B cell (primary cell): ENCODE measurements at regions of chr22 and their contacts with region 1.

Region 1: DNA sequence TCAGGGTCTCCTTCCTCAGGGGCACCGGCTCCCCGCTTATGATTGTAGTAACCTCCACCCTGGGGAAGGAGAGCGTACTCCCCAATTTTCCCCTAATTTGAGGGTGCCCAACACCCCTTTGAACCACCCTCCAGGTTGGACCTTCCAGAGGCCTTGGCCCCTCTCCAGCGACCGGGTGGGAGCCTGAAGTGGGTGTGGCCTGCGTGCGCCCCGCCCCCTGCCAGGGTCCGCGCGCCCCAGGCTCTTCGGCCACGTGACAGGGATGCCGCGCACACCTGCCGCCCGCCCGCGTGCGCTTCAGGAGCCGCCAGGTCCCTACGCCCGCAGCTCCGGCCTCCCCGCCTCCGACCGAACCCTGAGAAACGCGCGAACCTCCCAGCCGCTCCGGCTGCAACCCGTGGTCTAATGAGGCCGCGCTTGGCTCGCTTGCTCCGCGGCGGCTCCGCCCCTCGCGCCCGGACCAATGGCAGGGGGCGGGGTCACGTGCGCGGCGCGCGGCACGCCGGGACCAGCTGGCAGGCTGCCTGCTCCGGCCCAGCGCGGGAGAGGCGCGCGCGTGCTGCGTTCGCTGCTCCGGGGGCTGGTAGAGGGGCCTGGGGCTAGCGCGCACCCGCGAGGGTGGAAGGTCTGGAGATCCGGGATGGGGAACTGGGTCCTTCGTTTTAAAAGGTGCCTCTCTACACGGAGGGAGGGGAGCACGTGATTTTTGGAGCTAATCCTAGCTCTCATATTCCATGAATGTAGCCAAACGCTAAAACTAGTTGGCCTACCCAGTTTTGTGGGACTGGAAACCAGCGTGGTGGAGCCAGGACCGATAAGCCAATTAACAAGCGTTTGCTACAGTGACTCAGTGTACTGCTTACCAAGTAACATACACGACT is at the start of gene FOXRED2:
- DNase-seq: peak; percentile 92
- ATAC-seq: peak; percentile 98
- H3K4me3 ChIP-seq: peak within 1 kb of the TSS; percentile 26 to 80 (median 59)
- H3K4me3 Mint-ChIP-seq: peak within 1 kb of the TSS; percentile 77
- H3K27ac ChIP-seq: peak within 1 kb of the TSS; percentile 43 to 68
- H3K27ac Mint-ChIP-seq: peak within 1 kb of the TSS; percentile 56
- H3K4me1 ChIP-seq: peaks cover 10 to 13% of the 10 kb centered on the region in 2 donors
- H3K4me1 Mint-ChIP-seq: peaks cover 11% of the 10 kb centered on the region
- H3K27me3 ChIP-seq: no peaks in the 10 kb centered on the region
- H3K27me3 Mint-ChIP-seq: no peaks in the 10 kb centered on the region
- CTCF ChIP-seq: no peak
- total RNA-seq, gene FOXRED2: 7.1 and 7.4 TPM in 2 replicates

Region 2: DNA sequence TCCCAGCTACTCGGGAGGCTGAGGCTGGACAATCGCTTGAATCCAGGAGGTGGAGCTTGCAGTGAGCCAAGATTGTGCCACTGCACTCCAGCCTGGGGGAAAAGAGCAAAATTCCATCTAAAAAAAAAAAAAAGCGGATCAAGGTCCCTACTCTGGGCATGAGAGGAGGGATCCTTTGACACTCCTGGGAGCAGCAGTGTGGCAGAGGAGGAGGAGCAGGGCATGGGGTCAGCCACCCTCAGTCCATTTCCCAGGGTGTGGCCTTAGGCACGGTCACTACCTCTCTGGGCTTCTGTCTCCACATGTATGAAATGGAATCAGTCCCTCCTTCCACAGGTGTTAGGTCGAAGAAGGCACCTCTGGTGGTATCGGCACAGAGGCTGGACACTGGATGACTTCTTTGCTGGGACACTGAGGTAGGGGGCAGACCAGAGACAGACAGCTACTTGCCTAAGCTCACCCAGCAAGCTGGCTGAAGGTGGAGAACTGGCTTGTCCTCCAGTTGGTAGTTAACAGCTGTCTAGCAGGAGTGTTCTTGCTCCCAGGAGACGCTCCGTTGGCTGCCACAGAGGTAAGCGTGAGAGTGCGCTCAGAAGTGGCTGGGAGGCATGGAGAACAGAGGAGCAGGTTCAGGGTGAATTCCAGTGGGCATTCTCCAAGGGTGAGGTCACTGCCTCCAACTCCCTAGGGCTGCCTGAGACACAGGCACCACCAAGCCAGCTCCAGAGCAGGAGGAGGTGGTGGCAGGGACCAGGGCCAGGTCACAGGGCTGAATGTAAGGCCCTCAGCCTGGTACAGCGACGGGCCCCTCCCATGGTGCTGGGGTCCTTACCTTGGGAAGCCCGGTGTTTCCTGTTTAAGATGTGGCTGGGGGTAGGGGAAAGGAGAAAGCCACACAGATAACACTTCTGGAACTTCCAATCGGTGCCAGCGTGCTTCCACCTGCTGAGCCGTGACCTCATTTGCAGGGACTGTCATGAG is 44.9 kb before region 1 on chr22:
- CTCF ChIA-PET with region 1: no interaction called
- POLR2A ChIA-PET with region 1: no interaction called
- intact Hi-C with region 1: no loop called
- DNase-seq: no peak
- ATAC-seq: no peak
- H3K4me3 ChIP-seq: no peak overlapping the region
- H3K4me3 Mint-ChIP-seq: no peak overlapping the region
- H3K27ac ChIP-seq: no peak overlapping the region
- H3K27ac Mint-ChIP-seq: no peak overlapping the region
- H3K4me1 ChIP-seq: peaks cover 3 to 7% of the 10 kb centered on the region in 2 donors
- H3K4me1 Mint-ChIP-seq: peaks cover 5% of the 10 kb centered on the region
- H3K27me3 ChIP-seq: no peaks in the 10 kb centered on the region
- H3K27me3 Mint-ChIP-seq: no peaks in the 10 kb centered on the region
- CTCF ChIP-seq: no peak

Region 3: GRCh38 chr22:36493690-36494110 is 13.2 kb before region 1 on chr22:
- CTCF ChIA-PET with region 1: interaction called, 20 read pairs
- POLR2A ChIA-PET with region 1: interaction called, 12 read pairs
- intact Hi-C with region 1: no loop called
- DNase-seq: peak; percentile 92
- ATAC-seq: peak; percentile 88
- H3K4me3 ChIP-seq: peak overlapping the region in 3 of 5 experiments; percentile 11 to 42 (median 26)
- H3K4me3 Mint-ChIP-seq: peak overlapping the region; percentile 62
- H3K27ac ChIP-seq: peak overlapping the region; percentile 34 to 72
- H3K27ac Mint-ChIP-seq: peak overlapping the region; percentile 81
- H3K4me1 ChIP-seq: peaks cover 27 to 35% of the 10 kb centered on the region in 2 donors
- H3K4me1 Mint-ChIP-seq: peaks cover 24% of the 10 kb centered on the region
- H3K27me3 ChIP-seq: no peaks in the 10 kb centered on the region
- H3K27me3 Mint-ChIP-seq: no peaks in the 10 kb centered on the region
- CTCF ChIP-seq: no peak

Region 4: GRCh38 chr22:36757668-36758211 is 250.9 kb after region 1 on chr22:
- CTCF ChIA-PET with region 1: no interaction called
- POLR2A ChIA-PET with region 1: no interaction called
- intact Hi-C with region 1: no loop called
- DNase-seq: peak; percentile 77
- ATAC-seq: peak; percentile 93
- H3K4me3 ChIP-seq: no peak overlapping the region
- H3K4me3 Mint-ChIP-seq: no peak overlapping the region
- H3K27ac ChIP-seq: no peak overlapping the region
- H3K27ac Mint-ChIP-seq: no peak overlapping the region
- H3K4me1 ChIP-seq: no peaks in the 10 kb centered on the region
- H3K4me1 Mint-ChIP-seq: no peaks in the 10 kb centered on the region
- H3K27me3 ChIP-seq: peaks cover 0 to 20% (median 1%) of the 10 kb centered on the region in 4 experiments
- H3K27me3 Mint-ChIP-seq: peaks cover 18% of the 10 kb centered on the region
- CTCF ChIP-seq: peak; percentile 84